GM12878 (cell line): ENCODE measurements at regions of chr10 and their contacts with region 1.

Region 1: DNA sequence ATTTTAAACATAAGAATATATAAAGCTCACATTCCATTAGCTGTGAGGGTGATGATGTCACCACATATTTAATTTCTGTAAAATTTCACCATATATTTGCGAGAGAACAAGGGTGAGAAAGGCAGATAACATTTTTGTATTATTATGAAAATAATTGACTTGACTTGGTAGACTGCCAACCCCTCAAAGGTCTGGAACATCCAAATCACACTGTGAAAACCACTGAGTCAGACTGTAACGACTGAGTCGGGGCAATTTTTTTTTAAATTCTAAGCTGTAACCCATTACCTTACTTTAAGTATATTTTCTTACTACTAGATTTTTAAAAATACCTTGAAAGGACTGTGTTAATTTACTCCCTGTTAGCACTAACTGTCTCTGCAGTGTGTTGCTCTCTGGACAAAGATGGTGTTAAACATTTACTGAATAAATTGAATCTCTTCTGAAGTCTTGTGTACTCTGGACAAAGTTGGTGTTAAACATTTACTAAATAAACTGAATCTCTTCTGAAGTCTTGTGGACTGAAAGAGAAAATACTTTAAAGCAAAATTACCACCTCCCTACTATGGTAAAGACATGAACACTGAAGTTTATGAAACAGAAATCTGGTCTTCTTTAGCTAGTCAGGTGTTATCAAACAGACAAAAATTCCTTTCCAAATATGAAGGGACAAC is 14.1 kb downstream of the PDZD8 start:
- DNase-seq: no peak
- ATAC-seq: peak; percentile 48
- H3K4me3 ChIP-seq: no peak overlapping the region
- H3K27ac ChIP-seq: peak overlapping the region; percentile 37
- H3K4me1 ChIP-seq: peaks cover 15% of the 10 kb centered on the region
- H3K27me3 ChIP-seq: no peaks in the 10 kb centered on the region
- CTCF ChIP-seq: no peak
- EP300 ChIP-seq: no peak
- POLR2A ChIP-seq: no peak
- RAD21 ChIP-seq: no peak

Region 2: DNA sequence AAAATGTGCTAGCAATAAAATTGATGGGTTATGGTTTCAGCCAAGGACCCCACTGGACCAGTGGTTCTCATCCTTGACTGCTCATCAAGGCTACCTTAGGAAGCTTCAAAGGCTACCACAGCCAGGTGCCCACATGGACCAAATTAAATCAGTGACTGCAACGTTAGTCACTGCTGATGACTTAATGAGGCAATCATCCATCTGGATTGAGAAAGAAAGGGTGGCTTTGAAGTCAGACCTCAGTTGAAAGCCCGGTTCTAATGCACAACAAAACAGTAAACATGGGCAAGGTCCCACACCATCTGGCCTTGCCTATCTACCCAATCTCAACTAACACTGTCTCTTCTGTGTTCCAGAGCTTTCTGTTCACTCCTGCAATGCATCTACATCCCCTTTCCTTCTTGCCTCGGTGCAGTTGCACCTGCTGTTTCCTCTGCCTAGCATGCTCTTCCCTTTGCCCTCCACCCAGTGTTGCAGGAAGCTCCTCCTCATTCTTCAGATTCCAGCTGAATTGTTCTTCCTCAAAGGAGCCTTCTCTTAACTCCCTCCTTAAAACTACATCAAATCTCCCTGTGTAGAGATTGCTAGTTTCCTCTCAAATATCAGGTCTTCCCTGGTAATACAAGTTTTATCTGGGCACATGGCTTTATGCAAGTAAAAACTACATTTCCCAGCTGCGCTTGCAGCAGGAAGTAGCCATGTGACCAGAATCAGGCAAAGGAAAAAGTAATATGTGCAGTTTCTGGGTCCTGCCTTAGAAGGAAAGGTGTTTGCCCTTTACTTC is 174.1 kb before region 1 on chr10:
- CTCF ChIA-PET with region 1: no interaction called
- POLR2A ChIA-PET with region 1: no interaction called
- RAD21 ChIA-PET with region 1: no interaction called
- SMC1A ChIA-PET with region 1: no interaction called
- in situ Hi-C with region 1: no loop called
- intact Hi-C with region 1: no loop called
- DNase-seq: no peak
- ATAC-seq: no peak; the same call in 2 of the 3 replicates
- H3K4me3 ChIP-seq: no peak overlapping the region
- H3K27ac ChIP-seq: no peak overlapping the region
- H3K4me1 ChIP-seq: no peaks in the 10 kb centered on the region
- H3K27me3 ChIP-seq: no peaks in the 10 kb centered on the region; a peak in 1 of 4 replicates
- CTCF ChIP-seq: no peak
- EP300 ChIP-seq: no peak
- POLR2A ChIP-seq: no peak
- RAD21 ChIP-seq: no peak

Region 3: GRCh38 chr10:117350909-117351308 is 10.2 kb before region 1 on chr10:
- CTCF ChIA-PET with region 1: interaction called, 32 read pairs
- POLR2A ChIA-PET with region 1: interaction called, 3 read pairs
- RAD21 ChIA-PET with region 1: interaction called, 16 read pairs
- SMC1A ChIA-PET with region 1: interaction called, 35 read pairs
- in situ Hi-C with region 1: no loop called
- intact Hi-C with region 1: no loop called
- DNase-seq: no peak
- ATAC-seq: peak; percentile 72
- H3K4me3 ChIP-seq: no peak overlapping the region
- H3K27ac ChIP-seq: peak overlapping the region; percentile 46
- H3K4me1 ChIP-seq: peaks cover 5% of the 10 kb centered on the region; the same call in 1 of the 2 replicates
- H3K27me3 ChIP-seq: no peaks in the 10 kb centered on the region
- CTCF ChIP-seq: no peak
- EP300 ChIP-seq: no peak
- POLR2A ChIP-seq: no peak
- RAD21 ChIP-seq: no peak

Region 4: GRCh38 chr10:117375360-117376178 is 14.4 kb after region 1 on chr10 and contains the start of gene PDZD8:
- CTCF ChIA-PET with region 1: interaction called, 27 read pairs
- POLR2A ChIA-PET with region 1: interaction called, 33 read pairs
- RAD21 ChIA-PET with region 1: interaction called, 26 read pairs
- SMC1A ChIA-PET with region 1: interaction called, 46 read pairs
- in situ Hi-C with region 1: no loop called
- intact Hi-C with region 1: no loop called
- DNase-seq: peak; percentile 33
- ATAC-seq: peak; percentile 83
- H3K4me3 ChIP-seq: peak within 1 kb of the TSS; percentile 84
- H3K27ac ChIP-seq: peak within 1 kb of the TSS; percentile 69
- H3K4me1 ChIP-seq: 0 out of 2 replicates have a peak, but pooled peaks cover 5% of the 10 kb centered on the region
- H3K27me3 ChIP-seq: no peaks in the 10 kb centered on the region; a peak in 1 of 4 replicates
- CTCF ChIP-seq: no peak
- EP300 ChIP-seq: no peak
- POLR2A ChIP-seq: peak; percentile 74; the same call in 1 of the 2 replicates
- RAD21 ChIP-seq: no peak
- polyA plus RNA-seq, gene PDZD8: 2.0 to 2.1 TPM